GM12878 (cell line): ENCODE measurements at regions of chr7 and their contacts with region 1.

Region 1: GRCh38 chr7:87188930-87189329 is 30.6 kb downstream of the TMEM243 start:
- DNase-seq: no peak
- ATAC-seq: peak; percentile 28
- H3K4me3 ChIP-seq: no peak overlapping the region
- H3K27ac ChIP-seq: no peak overlapping the region
- H3K4me1 ChIP-seq: no peaks in the 10 kb centered on the region
- H3K27me3 ChIP-seq: no peaks in the 10 kb centered on the region
- CTCF ChIP-seq: no peak
- EP300 ChIP-seq: no peak
- POLR2A ChIP-seq: no peak
- RAD21 ChIP-seq: no peak

Region 2: DNA sequence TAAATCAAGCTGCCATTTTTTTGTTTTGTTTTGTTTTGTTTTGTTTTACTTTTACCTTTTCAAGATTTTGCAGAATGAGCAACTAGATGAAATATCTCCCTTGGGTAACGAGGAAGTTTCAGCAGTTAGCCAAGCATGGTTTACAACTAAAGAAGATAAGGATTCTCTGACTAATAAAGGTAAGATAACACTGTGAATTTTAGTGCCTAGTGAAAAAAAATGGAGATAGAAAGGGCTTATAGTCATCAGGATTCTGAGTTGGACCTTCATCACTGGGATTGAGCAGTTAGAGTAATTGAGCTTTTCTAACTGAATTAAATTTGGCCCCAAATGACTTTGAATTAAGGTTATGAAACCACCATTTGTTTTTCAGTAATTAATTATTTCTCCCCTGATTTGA is 15.5 kb before region 1 on chr7:
- CTCF ChIA-PET with region 1: interaction called, 8 read pairs
- POLR2A ChIA-PET with region 1: interaction called, 4 read pairs
- RAD21 ChIA-PET with region 1: interaction called, 4 read pairs
- SMC1A ChIA-PET with region 1: interaction called, 12 read pairs
- in situ Hi-C with region 1: no loop called
- intact Hi-C with region 1: loop called (anchors 1 kb)
- DNase-seq: no peak
- ATAC-seq: no peak
- H3K4me3 ChIP-seq: no peak overlapping the region
- H3K27ac ChIP-seq: no peak overlapping the region
- H3K4me1 ChIP-seq: no peaks in the 10 kb centered on the region
- H3K27me3 ChIP-seq: no peaks in the 10 kb centered on the region
- CTCF ChIP-seq: no peak
- EP300 ChIP-seq: no peak
- POLR2A ChIP-seq: no peak
- RAD21 ChIP-seq: no peak

Region 3: GRCh38 chr7:87199700-87200450 is 10.9 kb after region 1 on chr7:
- CTCF ChIA-PET with region 1: interaction called, 13 read pairs
- POLR2A ChIA-PET with region 1: interaction called, 19 read pairs
- RAD21 ChIA-PET with region 1: no interaction called
- SMC1A ChIA-PET with region 1: interaction called, 11 read pairs
- in situ Hi-C with region 1: no loop called
- intact Hi-C with region 1: no loop called
- DNase-seq: no peak
- ATAC-seq: peak; percentile 21
- H3K4me3 ChIP-seq: no peak overlapping the region
- H3K27ac ChIP-seq: no peak overlapping the region; the same call in 1 of the 2 replicates
- H3K4me1 ChIP-seq: peaks cover 8% of the 10 kb centered on the region
- H3K27me3 ChIP-seq: no peaks in the 10 kb centered on the region
- CTCF ChIP-seq: no peak
- EP300 ChIP-seq: no peak
- POLR2A ChIP-seq: peak; percentile 52; the same call in 1 of the 2 replicates
- RAD21 ChIP-seq: no peak

Region 4: DNA sequence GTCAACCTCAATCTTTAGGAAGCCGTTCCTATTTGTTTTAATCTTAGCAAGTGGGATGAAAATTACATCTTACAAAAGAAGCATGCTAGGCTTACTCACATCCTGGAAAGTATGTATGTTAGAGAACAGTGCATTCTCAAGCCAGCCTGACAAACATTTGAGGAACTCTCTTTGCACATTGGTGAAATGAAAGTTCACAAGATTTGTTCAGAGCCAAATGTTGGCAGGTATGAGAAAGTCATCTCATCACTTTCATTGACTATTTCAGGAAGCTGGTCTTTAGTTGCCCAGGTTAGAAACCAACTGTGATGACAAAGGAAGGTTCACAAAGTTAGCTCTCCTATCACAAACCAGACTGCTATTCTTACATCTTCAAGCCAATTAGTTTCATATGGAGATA is 354.7 kb after region 1 on chr7:
- CTCF ChIA-PET with region 1: no interaction called
- POLR2A ChIA-PET with region 1: no interaction called
- RAD21 ChIA-PET with region 1: no interaction called
- SMC1A ChIA-PET with region 1: no interaction called
- in situ Hi-C with region 1: no loop called
- intact Hi-C with region 1: no loop called
- DNase-seq: no peak
- ATAC-seq: peak; percentile 71
- H3K4me3 ChIP-seq: no peak overlapping the region
- H3K27ac ChIP-seq: no peak overlapping the region
- H3K4me1 ChIP-seq: no peaks in the 10 kb centered on the region
- H3K27me3 ChIP-seq: no peaks in the 10 kb centered on the region
- CTCF ChIP-seq: no peak
- EP300 ChIP-seq: no peak
- POLR2A ChIP-seq: no peak
- RAD21 ChIP-seq: no peak